Heart left ventricle (tissue), 16 donors: ENCODE measurements at regions of chr16 and their contacts with region 1.

Region 1: DNA sequence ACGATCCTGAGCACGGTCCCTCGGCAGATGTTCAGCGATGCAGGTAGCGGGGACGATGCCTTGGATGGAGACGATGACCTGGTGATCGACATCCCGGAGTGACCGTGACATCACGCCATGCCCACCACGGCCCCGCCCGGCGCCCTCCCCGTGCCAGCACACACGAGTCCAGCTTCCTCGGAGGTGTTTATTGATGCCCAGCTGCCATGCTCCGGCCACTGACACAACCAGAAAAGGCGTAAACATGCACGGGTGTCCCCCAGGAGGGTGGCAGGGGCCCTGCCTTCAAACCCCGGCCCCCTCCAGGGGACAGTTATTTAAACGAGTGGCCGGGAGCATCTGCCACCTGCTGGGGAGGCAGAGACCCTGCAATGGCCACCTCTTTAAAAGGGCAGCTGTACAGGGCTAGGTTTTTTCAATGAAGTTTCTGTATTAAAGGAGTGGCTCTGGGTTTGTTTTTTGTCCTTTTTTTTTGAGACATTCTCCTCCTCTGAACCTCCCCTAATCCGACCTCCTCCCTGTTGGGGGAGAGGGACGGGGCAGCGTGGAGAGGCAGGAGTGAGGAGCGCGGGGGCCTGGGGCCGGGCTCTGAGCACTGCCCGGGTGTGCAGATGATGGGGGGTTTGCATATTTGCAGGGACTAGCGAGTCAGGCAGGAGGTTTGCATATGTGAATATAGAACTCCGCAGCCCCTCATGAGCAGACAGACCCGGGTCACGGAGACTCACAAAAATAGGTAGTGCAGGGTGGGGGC is 5.3 kb downstream of the DOC2A start:
- DNase-seq: peak in 2 of 5 donors; percentile 22 to 64
- ATAC-seq: peak in 3 of 4 donors; percentile 29 to 66 (median 62)
- H3K4me3 ChIP-seq: no peak overlapping the region
- H3K27ac ChIP-seq: no peak overlapping the region
- H3K4me1 ChIP-seq: peaks cover 0 to 14% (median 3%) of the 10 kb centered on the region in 12 donors
- H3K27me3 ChIP-seq: peaks cover 7 to 25% (median 18%) of the 10 kb centered on the region in 9 donors
- CTCF ChIP-seq: peak; percentile 73 to 89 (median 84)
- POLR2A ChIP-seq: peak in 1 of 2 donors; percentile 9

Region 2: GRCh38 chr16:29815793-29816693 is 189.5 kb before region 1 on chr16 and contains the start of gene PAGR1:
- intact Hi-C with region 1: loop called in 1 of 10 experiments (anchors 10 kb)
- DNase-seq: peak; percentile 97 to 99 (median 99)
- ATAC-seq: peak; percentile 80 to 89 (median 86)
- H3K4me3 ChIP-seq: peak within 1 kb of the TSS; percentile 45 to 91 (median 74)
- H3K27ac ChIP-seq: peak within 1 kb of the TSS; percentile 84 to 97 (median 93)
- H3K4me1 ChIP-seq: peaks cover 3 to 71% (median 51%) of the 10 kb centered on the region in 12 donors
- H3K27me3 ChIP-seq: peaks cover 0 to 4% (median 0%) of the 10 kb centered on the region in 9 donors
- CTCF ChIP-seq: peak; percentile 82 to 98 (median 91)
- POLR2A ChIP-seq: peak in 1 of 2 donors; percentile 60
- total RNA-seq, gene PAGR1: 10.8 to 23.9 (median 12.6) TPM

Region 3: DNA sequence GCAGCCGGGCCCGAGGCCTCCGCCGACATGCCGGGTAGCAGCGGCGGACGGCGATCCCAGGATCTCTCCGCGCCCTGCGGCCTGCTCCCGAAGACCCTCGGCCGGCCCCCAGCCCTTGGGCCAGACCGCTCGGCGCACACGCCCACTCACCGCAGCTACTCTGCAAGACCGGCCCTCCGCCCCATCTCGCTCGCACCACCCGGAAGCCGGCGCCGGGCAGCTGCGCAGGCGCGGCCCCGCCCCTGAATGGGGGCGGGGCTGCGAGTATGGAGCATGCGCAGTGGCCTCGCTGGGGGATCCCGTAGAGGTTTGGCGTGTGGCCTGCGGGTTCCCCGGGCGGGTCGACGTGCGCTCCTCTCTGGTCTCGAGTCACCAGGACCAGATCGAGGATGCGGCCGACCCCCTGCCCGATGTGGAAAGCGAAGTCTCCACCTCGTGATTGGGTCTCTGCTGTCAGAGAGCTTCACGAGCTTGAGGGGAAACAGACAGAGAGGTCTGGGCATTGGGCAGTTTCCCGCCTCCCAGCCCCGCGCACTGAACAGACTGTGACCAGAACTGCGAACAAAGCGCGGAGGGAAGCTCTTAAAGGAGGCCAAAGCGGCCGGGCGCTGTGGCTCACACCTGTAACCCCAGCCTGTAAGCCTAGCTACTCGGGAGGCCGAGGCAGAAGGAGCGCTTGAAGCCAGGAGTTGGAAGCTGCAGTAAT is 79.4 kb before region 1 on chr16 and contains the start of gene KCTD13:
- intact Hi-C with region 1: loop called in 4 of 10 experiments (anchors 5 to 10 kb)
- DNase-seq: peak; percentile 85 to 95 (median 89)
- ATAC-seq: peak; percentile 89 to 99 (median 99)
- H3K4me3 ChIP-seq: peak within 1 kb of the TSS; percentile 72 to 100 (median 92)
- H3K27ac ChIP-seq: peak within 1 kb of the TSS; percentile 72 to 96 (median 88)
- H3K4me1 ChIP-seq: peaks cover 4 to 27% (median 18%) of the 10 kb centered on the region in 12 donors
- H3K27me3 ChIP-seq: no peaks in the 10 kb centered on the region
- CTCF ChIP-seq: no peak
- POLR2A ChIP-seq: peak in 1 of 2 donors; percentile 93
- total RNA-seq, gene KCTD13: 3.6 to 9.1 (median 7.2) TPM

Region 4: DNA sequence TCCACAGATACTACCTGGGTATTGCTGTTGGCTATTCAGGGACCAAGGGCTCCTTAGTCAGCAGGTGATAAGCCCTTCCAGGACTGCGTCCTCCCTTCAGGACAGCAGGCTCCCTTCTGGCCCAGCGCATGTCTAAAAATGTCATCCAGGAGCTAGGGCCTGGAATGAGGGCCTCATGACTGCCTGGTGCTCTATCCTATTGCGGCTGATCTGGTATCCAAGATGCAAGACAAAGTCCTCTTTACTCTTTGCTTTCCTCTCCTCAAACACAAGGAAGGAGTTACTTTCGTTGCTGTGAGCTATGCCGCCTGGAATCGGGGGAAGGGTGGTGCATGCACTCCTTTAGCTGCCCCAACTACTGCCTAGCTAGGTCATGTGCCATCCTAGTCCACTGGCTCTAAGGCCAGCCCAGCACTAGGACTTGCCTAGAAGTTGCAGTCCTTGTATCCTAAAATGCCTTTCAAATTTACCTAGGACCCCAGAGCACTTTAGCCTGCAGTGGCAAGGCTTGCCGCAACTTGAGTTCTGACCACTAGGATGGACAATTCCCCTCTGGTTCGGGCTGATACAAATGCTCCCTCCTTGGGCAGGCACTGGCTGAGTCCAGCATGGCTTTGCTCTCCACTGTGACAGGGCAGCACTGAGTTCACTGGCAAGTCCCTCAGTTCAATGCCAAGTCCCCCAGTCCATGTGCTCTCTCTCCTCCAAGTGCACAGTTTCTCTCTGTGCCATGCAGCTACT is 53.7 kb before region 1 on chr16:
- intact Hi-C with region 1: loop called in 1 of 10 experiments (anchors 10 kb)
- DNase-seq: no peak
- ATAC-seq: no peak
- H3K4me3 ChIP-seq: no peak overlapping the region
- H3K27ac ChIP-seq: no peak overlapping the region
- H3K4me1 ChIP-seq: no peaks in the 10 kb centered on the region
- H3K27me3 ChIP-seq: no peaks in the 10 kb centered on the region
- CTCF ChIP-seq: no peak
- POLR2A ChIP-seq: no peak

Region 5: GRCh38 chr16:29968205-29968604 is 37.3 kb before region 1 on chr16:
- intact Hi-C with region 1: loop called in 1 of 10 experiments (anchors 5 kb)
- DNase-seq: no peak
- ATAC-seq: no peak
- H3K4me3 ChIP-seq: no peak overlapping the region
- H3K27ac ChIP-seq: no peak overlapping the region
- H3K4me1 ChIP-seq: peaks cover 0 to 24% (median 7%) of the 10 kb centered on the region in 12 donors
- H3K27me3 ChIP-seq: no peaks in the 10 kb centered on the region
- CTCF ChIP-seq: no peak
- POLR2A ChIP-seq: no peak

Region 6: GRCh38 chr16:30052671-30053372 is 47.3 kb after region 1 on chr16:
- intact Hi-C with region 1: loop called in 1 of 10 experiments (anchors 5 kb)
- DNase-seq: peak; percentile 94 to 97 (median 95)
- ATAC-seq: peak; percentile 90 to 98 (median 93)
- H3K4me3 ChIP-seq: peak overlapping the region; percentile 40 to 91 (median 76)
- H3K27ac ChIP-seq: peak overlapping the region in 6 of 12 donors; percentile 1 to 64 (median 42)
- H3K4me1 ChIP-seq: peaks cover 0 to 27% (median 11%) of the 10 kb centered on the region in 12 donors
- H3K27me3 ChIP-seq: no peaks in the 10 kb centered on the region
- CTCF ChIP-seq: no peak
- POLR2A ChIP-seq: no peak